WTC11 (cell line): ENCODE measurements at regions of chr20 and their contacts with region 1.

Region 1: GRCh38 chr20:32789896-32790750 is 27.9 kb downstream of the DNMT3B start:
- DNase-seq: peak; percentile 83
- ATAC-seq: peak; percentile 73
- H3K4me3 Mint-ChIP-seq: no peak overlapping the region
- H3K27ac Mint-ChIP-seq: peak overlapping the region; percentile 93
- H3K4me1 Mint-ChIP-seq: peaks cover 30% of the 10 kb centered on the region
- H3K27me3 Mint-ChIP-seq: no peaks in the 10 kb centered on the region
- CTCF ChIP-seq: peak; percentile 98

Region 2: DNA sequence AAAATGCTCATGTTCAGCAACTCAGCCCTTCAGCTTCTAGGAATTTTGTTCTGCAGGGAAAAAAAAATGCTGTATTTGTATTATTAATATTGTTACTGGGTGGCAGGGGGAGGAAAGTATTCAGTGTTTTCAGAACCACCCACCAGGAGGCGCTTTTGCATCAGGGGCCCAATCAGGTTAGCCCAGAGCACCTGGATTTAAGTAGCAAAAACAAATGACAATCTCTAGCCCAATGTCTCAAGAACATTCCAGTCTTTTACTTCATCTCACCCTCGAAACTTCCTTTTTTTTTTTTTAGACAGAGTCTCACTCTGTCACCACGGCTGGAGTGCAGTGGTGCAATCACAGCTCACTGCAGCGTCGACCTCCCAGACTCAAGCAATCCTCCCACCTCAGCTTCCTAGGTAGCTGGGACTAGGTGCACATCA is 115.7 kb before region 1 on chr20:
- CTCF ChIA-PET with region 1: interaction called, 18 read pairs
- POLR2A ChIA-PET with region 1: no interaction called
- DNase-seq: peak; percentile 69
- ATAC-seq: peak; percentile 53
- H3K4me3 Mint-ChIP-seq: no peak overlapping the region
- H3K27ac Mint-ChIP-seq: no peak overlapping the region; the same call in 1 of the 2 replicates
- H3K4me1 Mint-ChIP-seq: peaks cover 42% of the 10 kb centered on the region
- H3K27me3 Mint-ChIP-seq: no peaks in the 10 kb centered on the region
- CTCF ChIP-seq: peak; percentile 61

Region 3: DNA sequence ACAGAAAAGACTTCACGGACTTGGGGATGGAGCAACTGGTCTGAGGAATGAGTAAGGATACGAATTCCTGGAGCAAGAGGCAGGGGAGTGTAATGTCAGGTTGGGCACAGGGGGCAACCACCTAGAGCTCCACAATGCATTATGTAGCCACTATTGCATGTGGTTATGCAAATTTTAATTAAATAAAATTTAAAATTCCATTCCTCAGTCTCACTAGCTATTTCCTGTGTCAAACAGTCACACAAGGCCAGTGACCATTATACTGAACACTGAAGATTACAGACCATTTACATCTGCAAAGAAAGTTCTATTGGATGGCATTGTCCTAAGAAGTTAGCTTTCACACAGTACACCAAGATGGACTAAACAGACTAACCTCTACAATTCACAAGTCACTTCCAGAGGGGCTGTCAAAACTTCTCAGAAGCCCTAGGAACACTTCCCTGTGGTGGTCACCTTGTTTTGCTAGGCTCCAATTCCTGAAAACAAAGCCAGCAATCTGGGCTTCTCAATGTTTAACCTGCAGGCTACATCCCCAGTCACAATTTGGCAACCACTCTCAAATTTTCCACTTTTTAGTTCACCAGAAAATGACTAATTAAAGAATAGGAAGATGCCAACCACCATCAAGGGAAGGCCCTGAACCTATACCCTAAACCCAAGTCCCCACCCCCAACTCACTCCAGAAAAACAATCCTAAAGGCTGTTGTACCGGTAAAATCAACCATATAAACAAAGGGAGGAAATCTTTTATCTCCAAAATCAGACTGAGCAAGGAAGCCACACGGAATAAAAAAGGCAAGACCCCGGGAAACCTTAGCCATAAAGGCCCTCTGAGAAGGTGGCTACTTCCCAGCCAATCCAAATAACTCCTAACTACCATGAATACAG is 82.2 kb before region 1 on chr20:
- CTCF ChIA-PET with region 1: interaction called, 14 read pairs
- POLR2A ChIA-PET with region 1: no interaction called
- DNase-seq: no peak
- ATAC-seq: peak; percentile 49
- H3K4me3 Mint-ChIP-seq: no peak overlapping the region
- H3K27ac Mint-ChIP-seq: peak overlapping the region; percentile 90
- H3K4me1 Mint-ChIP-seq: peaks cover 43% of the 10 kb centered on the region
- H3K27me3 Mint-ChIP-seq: no peaks in the 10 kb centered on the region
- CTCF ChIP-seq: no peak

Region 4: DNA sequence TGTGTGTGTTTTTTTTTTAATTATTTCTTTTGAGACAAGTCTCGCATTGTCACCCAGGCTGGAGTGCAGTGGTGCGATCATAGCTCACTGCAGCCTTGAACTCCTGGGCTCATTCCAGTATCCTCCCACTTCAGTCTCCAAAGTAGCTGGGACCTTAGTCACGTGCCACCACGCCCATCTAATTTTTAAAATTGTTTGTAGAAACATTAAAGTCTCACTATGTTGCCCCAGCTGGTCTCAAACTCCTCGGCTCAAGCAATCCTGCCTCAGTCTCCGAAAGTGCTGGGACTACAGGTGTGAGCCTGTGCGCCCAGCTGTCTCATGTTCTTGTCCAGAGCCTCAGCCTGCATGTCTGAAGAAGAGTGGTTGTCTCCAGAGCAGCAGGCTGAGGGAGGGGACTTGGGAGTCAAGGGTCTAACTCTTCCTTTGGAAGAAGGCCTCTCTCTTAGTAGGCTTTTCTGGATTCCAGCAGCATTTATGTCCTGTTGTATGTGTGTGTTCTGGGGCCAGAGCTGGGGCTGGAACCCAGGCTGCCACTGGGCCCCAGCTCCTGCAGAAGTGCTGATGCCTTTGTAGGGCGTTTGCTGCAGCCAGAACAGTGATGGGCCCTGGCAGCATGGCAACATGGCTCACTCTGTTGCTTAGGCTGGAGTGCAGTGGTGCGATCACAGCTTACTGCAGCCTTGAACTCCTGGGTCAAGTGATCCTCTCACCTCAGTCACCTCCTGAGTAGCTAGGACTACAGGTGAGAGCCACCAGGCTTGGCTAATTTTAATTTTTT is 22.5 kb before region 1 on chr20:
- CTCF ChIA-PET with region 1: interaction called, 12 read pairs
- POLR2A ChIA-PET with region 1: no interaction called
- DNase-seq: no peak
- ATAC-seq: no peak
- H3K4me3 Mint-ChIP-seq: peak overlapping the region; percentile 67
- H3K27ac Mint-ChIP-seq: peak overlapping the region; percentile 95
- H3K4me1 Mint-ChIP-seq: peaks cover 70% of the 10 kb centered on the region
- H3K27me3 Mint-ChIP-seq: no peaks in the 10 kb centered on the region
- CTCF ChIP-seq: no peak

Region 5: GRCh38 chr20:32804022-32804715 is 14.0 kb after region 1 on chr20:
- CTCF ChIA-PET with region 1: interaction called, 21 read pairs
- POLR2A ChIA-PET with region 1: interaction called, 3 read pairs
- DNase-seq: no peak
- ATAC-seq: no peak
- H3K4me3 Mint-ChIP-seq: no peak overlapping the region
- H3K27ac Mint-ChIP-seq: peak overlapping the region; percentile 83
- H3K4me1 Mint-ChIP-seq: peaks cover 85% of the 10 kb centered on the region
- H3K27me3 Mint-ChIP-seq: no peaks in the 10 kb centered on the region
- CTCF ChIP-seq: no peak

Region 6: DNA sequence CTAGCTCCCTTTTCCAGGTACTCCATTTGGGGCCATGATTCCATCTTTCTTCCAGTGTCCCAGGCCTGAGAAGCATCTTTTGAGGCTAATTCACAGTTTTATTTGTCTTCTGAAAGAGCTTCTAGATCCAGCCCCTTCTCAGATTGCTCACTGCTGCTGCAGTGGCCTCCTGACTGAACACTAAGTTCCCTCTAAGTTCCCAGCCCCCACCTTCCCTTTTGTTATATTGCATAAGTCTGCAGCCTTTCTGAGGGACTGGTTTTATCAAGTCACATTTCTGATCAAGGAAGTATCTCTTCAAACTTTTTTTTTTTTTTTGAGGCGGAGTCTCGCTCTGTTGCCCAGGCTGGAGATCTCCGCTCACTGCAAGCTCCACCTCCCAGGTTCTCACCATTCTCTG is 40.3 kb after region 1 on chr20:
- CTCF ChIA-PET with region 1: interaction called, 11 read pairs
- POLR2A ChIA-PET with region 1: no interaction called
- DNase-seq: no peak
- ATAC-seq: no peak
- H3K4me3 Mint-ChIP-seq: no peak overlapping the region
- H3K27ac Mint-ChIP-seq: peak overlapping the region; percentile 72
- H3K4me1 Mint-ChIP-seq: 0 out of 2 replicates have a peak, but pooled peaks cover 13% of the 10 kb centered on the region
- H3K27me3 Mint-ChIP-seq: no peaks in the 10 kb centered on the region
- CTCF ChIP-seq: no peak

Region 7: DNA sequence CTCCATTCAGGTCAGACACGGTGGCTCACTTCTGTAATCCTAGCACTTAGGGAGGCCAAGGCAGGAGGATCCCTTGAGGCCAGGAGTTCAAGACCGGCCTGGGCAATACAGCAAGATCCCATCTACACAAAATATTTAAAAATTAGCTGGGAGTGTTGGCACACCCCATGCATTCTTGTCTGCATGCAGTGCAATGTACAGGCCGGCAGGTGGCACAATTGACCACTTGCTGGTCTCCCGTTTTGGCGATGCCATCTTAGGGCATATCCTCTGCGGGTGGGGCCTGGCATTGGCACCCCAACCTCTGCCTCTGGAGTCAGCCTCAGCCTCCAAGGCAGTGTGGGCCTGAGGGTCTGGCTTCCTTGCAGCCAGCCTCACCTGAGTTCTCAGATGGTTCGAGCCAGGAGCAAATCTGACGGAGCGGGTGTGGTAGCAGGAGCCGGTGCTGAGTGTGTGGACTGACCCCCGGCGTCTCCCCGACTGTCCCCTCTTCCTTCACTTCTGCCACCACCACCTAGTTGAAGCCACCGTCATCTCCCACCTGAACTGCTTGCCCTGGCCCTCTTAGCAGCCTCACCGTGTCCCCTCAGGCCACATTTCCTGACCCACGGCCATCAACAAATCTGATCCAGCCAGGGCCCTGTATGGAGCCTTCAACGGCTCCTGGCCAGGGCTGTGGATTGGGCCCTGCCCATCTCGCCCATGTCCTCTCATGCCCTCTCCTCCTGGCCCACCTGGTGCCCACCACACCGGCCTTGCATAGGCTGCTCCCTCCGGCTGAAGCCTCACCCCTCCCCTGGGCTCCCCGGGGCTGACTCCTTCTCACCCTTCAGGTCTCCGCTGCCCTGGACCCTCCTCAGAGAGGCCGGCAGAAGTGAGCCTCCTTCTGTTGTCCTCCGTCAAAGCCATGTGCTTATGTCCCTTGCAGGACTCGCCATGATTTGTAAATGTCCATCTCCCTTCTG is 112.6 kb after region 1 on chr20:
- CTCF ChIA-PET with region 1: no interaction called
- POLR2A ChIA-PET with region 1: no interaction called
- DNase-seq: peak; percentile 60
- ATAC-seq: peak; percentile 78
- H3K4me3 Mint-ChIP-seq: no peak overlapping the region
- H3K27ac Mint-ChIP-seq: no peak overlapping the region
- H3K4me1 Mint-ChIP-seq: no peaks in the 10 kb centered on the region
- H3K27me3 Mint-ChIP-seq: no peaks in the 10 kb centered on the region
- CTCF ChIP-seq: peak; percentile 89